Cardiac septum (tissue), 1 donor: ENCODE measurements at regions of chr3 and their contacts with region 1.

Region 1: DNA sequence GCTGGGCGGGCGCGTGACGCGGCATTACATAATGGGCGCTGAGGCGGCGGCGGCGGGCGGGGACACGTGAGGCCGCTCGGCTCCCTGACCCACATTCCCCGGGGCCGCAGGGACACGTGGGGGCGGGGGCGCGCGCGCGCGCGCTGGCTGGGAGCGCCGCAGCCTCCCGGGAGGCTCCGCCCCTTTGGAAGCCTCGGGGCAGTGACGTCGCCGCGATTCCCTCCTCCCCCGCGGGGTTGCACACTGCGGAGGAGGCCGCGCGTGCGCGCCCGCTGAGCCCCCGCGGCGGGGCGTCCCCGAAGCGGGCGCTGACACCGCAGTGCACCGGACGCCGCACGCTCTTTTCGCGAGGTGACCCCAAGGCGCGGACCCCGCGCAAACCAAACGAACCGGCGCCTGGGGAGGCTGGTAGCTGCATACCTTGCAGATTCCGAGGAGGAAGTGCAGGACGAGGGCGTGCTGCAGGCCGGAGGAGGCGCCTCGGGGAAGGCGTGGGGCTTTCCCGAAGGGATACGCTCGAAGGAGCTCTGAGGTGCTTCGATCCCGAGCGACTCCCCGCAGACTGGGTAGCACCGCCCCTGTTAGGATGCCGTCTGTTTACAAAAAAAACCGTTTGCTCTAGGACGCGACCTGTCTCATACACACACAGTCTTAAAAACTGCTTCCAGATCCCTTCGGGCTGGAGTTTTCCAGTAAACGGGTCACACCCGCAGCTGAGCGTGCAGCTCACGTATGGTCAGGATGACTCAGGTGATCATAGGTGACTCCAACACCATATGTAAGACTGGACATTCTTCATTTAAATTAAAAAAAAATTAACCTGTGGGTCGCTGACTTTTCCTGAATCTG is 1.0 kb downstream of the NR1D2 start:
- DNase-seq: peak; percentile 99

Region 2: GRCh38 chr3:23916886-23917678 is 29.0 kb before region 1 on chr3 and contains the starts of genes NKIRAS1 and RPL15:
- intact Hi-C with region 1: loop called (anchors 1 kb)
- DNase-seq: peak; percentile 99
- total RNA-seq, gene NKIRAS1: 17.2 TPM
- total RNA-seq, gene RPL15: 798 TPM

Region 3: DNA sequence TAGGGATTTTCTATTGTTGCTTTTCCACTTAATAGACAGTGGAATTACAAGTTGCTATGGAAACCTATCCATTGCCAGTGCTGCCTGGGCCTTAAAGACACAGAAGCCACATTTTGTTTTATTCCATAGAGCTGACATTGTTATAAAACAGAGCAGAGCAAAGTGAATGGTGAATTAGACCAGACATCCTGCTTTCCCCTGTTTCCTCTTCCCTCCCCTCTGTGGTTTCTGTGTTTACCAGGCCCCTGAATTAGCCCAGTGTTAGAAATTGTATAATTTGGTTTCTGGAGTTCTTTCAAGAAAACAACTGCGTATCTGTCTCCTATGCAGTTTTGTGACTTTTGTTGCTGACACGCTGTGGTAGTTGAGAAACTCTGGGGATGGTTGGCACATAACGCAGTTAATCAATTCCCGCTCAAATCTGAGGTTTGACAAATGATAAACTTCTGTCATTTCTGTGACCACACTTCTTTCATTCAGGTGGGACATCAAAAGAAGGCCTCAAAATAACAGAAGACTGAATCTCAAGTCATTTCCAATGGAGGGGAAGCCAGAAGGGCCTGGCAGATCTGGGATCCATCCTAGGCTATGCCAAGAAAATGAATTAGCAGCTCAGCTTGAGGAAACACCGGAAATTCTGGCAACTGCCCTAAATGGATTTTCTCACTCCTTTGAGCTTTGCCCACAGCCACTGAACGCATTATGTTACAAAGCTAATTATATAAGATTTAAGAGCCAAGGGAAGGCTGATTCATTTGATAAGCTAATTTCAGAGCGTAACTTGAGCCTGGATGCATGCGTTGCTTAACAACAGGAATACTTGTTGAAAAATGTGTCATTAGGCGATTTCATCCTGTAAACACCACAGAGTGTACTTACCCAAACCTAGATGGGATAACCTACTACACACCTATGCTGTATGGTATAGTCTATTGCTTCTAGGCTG is 45.8 kb after region 1 on chr3:
- intact Hi-C with region 1: loop called (anchors 5 kb)
- DNase-seq: no peak

Region 4: GRCh38 chr3:24060055-24060454 is 113.9 kb after region 1 on chr3:
- intact Hi-C with region 1: no loop called
- DNase-seq: no peak

Region 5: DNA sequence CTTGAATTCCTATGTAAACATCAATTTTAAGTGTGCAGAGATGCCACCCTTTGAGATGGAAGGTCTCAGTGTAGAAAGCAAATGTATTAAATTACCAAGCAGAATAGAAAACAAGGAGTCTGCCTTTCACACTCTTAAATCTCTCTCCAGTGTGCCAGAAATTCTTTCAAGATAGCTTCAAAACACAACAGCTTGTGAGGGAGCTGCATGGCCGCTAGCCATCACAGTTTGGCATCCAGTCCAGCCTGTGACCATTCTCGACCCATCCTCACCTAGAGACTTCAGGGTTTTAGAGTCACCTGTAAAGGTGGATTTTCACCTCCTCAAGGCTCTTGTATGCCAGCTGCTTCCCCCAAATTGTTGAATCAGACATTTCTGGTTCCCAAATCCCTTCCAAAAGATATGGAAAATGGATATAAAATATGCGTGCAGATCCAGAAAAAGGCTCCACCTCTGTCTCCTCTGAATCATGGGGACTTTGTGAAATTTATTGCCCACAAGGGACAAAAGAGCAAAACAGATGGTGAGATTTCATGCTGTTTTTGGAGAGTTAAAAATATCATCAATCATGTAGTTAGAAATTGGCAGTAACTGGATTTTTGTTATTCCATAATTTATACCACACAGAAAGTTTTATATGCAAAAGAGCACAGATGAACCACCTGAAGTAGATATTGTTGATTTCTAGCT is 662.7 kb after region 1 on chr3:
- intact Hi-C with region 1: no loop called
- DNase-seq: no peak